Posterior cingulate gyrus (tissue), 11 donors: ENCODE measurements at regions of chr2 and their contacts with region 1.

Region 1: GRCh38 chr2:233443468-233444183 is 89.3 kb downstream of the DGKD start:
- DNase-seq: peak; percentile 54 to 96 (median 78)

Region 2: GRCh38 chr2:233288719-233289118 is 154.9 kb before region 1 on chr2:
- intact Hi-C with region 1: loop called (anchors 10 kb)
- DNase-seq: peak in 4 of 10 donors; percentile 10 to 41 (median 26)

Region 3: DNA sequence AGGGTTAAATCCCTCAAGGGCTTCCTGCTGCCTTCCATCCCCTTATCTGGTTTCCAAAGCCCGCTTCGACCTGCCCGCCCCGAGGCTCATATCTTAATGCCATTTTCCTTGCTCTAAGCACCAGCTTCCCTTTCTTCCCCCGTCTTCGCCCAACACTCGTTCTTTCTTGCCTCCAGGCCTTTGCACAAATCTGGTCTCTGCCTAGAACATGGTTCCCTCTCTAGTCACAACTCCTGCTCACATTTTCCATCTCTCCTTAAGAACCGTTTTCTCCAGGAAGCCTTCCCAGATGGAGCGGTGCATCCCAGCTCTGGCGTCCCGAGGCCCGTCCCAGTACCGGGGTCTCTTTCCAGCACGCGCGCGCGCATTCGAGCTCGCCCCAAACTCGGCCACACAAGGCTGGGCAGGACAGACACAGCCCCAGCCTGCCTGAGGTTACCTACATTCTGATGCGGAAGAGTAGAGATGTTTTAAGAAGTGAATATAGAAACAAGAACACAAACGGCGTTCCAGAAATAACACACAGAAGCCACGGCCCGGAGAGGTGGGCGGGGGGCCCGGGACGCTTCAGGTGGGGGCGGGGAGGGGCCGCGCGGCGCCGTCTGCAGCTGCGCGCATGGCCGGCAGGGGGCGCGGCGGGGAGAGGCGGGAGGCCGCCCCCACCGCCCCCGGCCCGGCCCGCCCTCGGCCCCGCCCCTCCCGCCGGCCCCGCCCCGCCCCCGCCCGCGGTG is 89.7 kb before region 1 on chr2 and contains the start of gene DGKD:
- intact Hi-C with region 1: loop called (anchors 1 kb)
- DNase-seq: peak in 4 of 10 donors; percentile 42 to 91 (median 64)

Region 4: DNA sequence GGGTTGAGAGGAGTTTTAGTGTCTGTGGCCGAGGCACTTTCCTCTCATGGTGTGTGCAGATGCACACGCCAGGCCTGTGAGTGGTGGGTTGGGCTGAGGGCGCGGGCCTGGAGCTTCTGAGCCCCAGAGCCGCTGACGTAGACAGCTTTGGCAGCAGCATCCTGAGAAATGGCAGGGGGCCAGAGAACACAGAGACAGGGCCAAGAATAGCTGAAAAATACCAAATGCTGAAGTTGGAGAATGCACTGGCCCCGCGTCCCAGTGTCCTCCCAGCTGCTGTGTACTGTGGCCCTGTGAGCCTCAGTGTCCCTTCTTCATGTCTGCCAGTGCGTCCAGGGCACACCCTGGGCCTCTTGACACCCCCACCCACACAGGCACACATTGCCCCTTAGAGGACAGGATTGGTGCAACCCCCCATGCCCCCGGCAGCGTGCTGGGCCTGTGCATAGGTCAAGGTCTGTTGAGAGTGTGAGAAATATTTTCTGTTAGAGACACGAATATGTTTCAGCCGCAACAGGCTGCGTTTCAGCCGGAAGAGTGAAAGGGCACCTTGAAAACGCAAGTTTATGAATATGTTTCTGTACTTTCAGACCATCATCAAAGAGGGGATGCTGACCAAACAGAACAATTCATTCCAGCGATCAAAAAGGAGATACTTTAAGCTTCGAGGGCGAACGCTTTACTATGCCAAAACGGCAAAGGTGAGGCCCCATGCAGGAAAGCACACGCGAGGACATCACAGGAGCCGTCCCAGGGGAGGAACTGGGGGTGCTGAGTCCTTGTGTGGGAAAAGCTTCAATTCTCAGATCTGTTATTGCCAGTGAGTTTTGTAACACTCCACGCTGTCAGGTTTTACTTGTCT is 55.7 kb before region 1 on chr2:
- intact Hi-C with region 1: loop called (anchors 10 kb)
- DNase-seq: peak; percentile 75 to 96 (median 81)